ENCODE measurements at regions of chr11 and their contacts with region 1.

Region 1: GRCh38 chr11:108664730-108665525 is at the start of gene DDX10:
- DNase-seq: peak; percentile 99
- ATAC-seq: peak; percentile 100
- H3K4me3 ChIP-seq: peak within 1 kb of the TSS; percentile 69 to 94 (median 85)
- H3K4me3 Mint-ChIP-seq: peak within 1 kb of the TSS; percentile 98
- H3K27ac ChIP-seq: peak within 1 kb of the TSS; percentile 52 to 76
- H3K27ac Mint-ChIP-seq: peak within 1 kb of the TSS; percentile 92
- H3K4me1 ChIP-seq: peaks cover 30 to 32% of the 10 kb centered on the region in 2 donors
- H3K4me1 Mint-ChIP-seq: peaks cover 54% of the 10 kb centered on the region
- H3K27me3 ChIP-seq: no peaks in the 10 kb centered on the region
- H3K27me3 Mint-ChIP-seq: peaks cover 5% of the 10 kb centered on the region
- CTCF ChIP-seq: no peak
- total RNA-seq, gene DDX10: 30.6 and 35.8 TPM in 2 replicates

Region 2: GRCh38 chr11:107457558-107458271 is 1207.2 kb before region 1 on chr11 and contains the start of gene CWF19L2:
- CTCF ChIA-PET with region 1: no interaction called
- POLR2A ChIA-PET with region 1: no interaction called
- intact Hi-C with region 1: loop called (anchors 2 kb)
- DNase-seq: peak; percentile 94
- ATAC-seq: peak; percentile 96
- H3K4me3 ChIP-seq: peak within 1 kb of the TSS; percentile 65 to 99 (median 94)
- H3K4me3 Mint-ChIP-seq: peak within 1 kb of the TSS; percentile 94
- H3K27ac ChIP-seq: peak within 1 kb of the TSS; percentile 64 to 88
- H3K27ac Mint-ChIP-seq: peak within 1 kb of the TSS; percentile 93
- H3K4me1 ChIP-seq: peaks cover 12 to 14% of the 10 kb centered on the region in 2 donors
- H3K4me1 Mint-ChIP-seq: peaks cover 27% of the 10 kb centered on the region
- H3K27me3 ChIP-seq: no peaks in the 10 kb centered on the region
- H3K27me3 Mint-ChIP-seq: peaks cover 5% of the 10 kb centered on the region
- CTCF ChIP-seq: no peak
- total RNA-seq, gene CWF19L2: 44.3 and 44.6 TPM in 2 replicates

Region 3: DNA sequence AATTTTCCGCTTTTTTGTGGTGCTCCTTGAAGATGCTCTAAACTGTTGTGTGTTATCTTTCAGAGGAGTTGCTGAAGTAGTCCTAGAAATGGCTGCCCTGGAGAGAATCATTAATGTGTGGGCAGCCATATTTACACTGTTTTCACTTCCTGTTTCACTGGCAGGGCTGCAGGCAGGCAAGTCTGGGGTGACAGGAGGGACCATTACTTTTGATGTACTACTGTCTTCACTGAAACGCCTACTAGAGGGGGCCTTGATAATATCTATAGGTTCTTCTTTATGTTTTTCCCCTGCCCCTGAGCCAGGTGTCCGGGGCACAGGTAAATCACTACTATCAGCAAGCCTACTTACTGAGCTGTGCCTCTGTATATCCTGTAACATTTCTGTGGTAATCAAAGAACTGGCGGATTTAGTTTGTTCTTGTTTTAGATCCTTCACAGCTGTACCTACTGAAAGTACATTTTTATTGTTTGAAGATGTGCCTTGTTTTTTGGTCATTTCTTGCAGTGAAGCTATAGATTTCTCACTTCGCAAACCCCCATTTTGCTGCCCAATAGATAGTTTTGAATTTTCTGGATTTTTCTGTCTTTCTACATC is 503.9 kb before region 1 on chr11:
- CTCF ChIA-PET with region 1: no interaction called
- POLR2A ChIA-PET with region 1: no interaction called
- intact Hi-C with region 1: loop called (anchors 1 kb)
- DNase-seq: peak; percentile 76
- ATAC-seq: peak; percentile 99
- H3K4me3 ChIP-seq: no peak overlapping the region
- H3K4me3 Mint-ChIP-seq: peak overlapping the region; percentile 24
- H3K27ac ChIP-seq: peak overlapping the region; percentile 46 to 59
- H3K27ac Mint-ChIP-seq: peak overlapping the region; percentile 88
- H3K4me1 ChIP-seq: peaks cover 13 to 14% of the 10 kb centered on the region in 2 donors
- H3K4me1 Mint-ChIP-seq: peaks cover 12% of the 10 kb centered on the region
- H3K27me3 ChIP-seq: no peaks in the 10 kb centered on the region
- H3K27me3 Mint-ChIP-seq: no peaks in the 10 kb centered on the region
- CTCF ChIP-seq: no peak

Region 4: GRCh38 chr11:108467091-108467823 is 197.7 kb before region 1 on chr11 and contains the start of gene C11orf65:
- CTCF ChIA-PET with region 1: no interaction called
- POLR2A ChIA-PET with region 1: no interaction called
- intact Hi-C with region 1: loop called (anchors 1 kb)
- DNase-seq: peak; percentile 98
- ATAC-seq: peak; percentile 96
- H3K4me3 ChIP-seq: peak within 1 kb of the TSS; percentile 79 to 96 (median 87)
- H3K4me3 Mint-ChIP-seq: peak within 1 kb of the TSS; percentile 98
- H3K27ac ChIP-seq: peak within 1 kb of the TSS; percentile 97 to 98
- H3K27ac Mint-ChIP-seq: peak within 1 kb of the TSS; percentile 99
- H3K4me1 ChIP-seq: peaks cover 0 to 11% of the 10 kb centered on the region in 2 donors
- H3K4me1 Mint-ChIP-seq: peaks cover 16% of the 10 kb centered on the region
- H3K27me3 ChIP-seq: no peaks in the 10 kb centered on the region
- H3K27me3 Mint-ChIP-seq: no peaks in the 10 kb centered on the region
- CTCF ChIP-seq: no peak
- total RNA-seq, gene C11orf65: 1.4 and 1.7 TPM in 2 replicates

Region 5: DNA sequence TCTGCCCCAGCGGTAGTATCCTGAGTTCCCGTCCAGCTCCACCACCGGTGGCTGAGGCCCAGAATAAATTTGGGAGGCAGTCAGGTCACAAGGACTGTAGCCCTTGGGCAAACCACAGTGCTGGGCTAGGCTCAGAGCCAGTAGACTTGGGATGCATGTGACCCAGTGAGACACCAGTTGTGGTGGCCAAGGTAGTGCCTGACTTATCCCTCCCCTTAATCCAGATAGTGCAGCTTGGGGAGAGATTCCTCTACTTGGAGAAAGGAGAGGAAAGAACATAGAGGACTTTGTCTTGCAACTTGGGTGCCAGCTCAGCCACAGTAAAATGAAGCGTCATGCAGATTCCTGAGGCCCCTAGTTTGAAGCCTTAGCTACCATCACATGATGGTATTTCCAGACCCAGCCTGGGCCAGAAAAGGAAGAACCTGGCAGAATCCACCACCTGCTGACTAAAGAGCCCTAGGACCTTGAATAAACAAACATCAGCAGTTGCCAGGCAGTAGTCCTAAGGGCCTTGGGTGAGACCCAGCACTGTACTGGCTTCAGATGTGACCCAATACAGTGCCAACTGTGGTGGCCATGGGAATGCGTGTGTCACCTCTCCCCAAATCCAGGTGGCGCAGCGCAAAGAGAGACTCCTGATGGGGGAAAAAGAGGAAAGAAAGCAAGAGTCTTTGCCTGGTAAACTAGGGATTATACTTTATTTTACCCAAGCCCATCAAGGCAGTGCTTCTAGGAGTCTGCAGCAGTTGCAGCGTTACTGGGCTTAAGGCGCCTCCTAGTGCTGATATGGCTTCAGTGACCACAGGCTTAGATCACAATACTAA is 17.0 kb before region 1 on chr11:
- CTCF ChIA-PET with region 1: interaction called, 17 read pairs
- POLR2A ChIA-PET with region 1: no interaction called
- intact Hi-C with region 1: no loop called
- DNase-seq: peak; percentile 66
- ATAC-seq: peak; percentile 70
- H3K4me3 ChIP-seq: no peak overlapping the region
- H3K4me3 Mint-ChIP-seq: no peak overlapping the region
- H3K27ac ChIP-seq: no peak overlapping the region
- H3K27ac Mint-ChIP-seq: no peak overlapping the region
- H3K4me1 ChIP-seq: no peaks in the 10 kb centered on the region
- H3K4me1 Mint-ChIP-seq: no peaks in the 10 kb centered on the region
- H3K27me3 ChIP-seq: peaks cover 0 to 7% (median 0%) of the 10 kb centered on the region in 4 experiments
- H3K27me3 Mint-ChIP-seq: peaks cover 8% of the 10 kb centered on the region
- CTCF ChIP-seq: peak; percentile 71

Measured in B cell (primary cell).